WTC11 (cell line): ENCODE measurements at regions of chr4 and their contacts with region 1.

Region 1: DNA sequence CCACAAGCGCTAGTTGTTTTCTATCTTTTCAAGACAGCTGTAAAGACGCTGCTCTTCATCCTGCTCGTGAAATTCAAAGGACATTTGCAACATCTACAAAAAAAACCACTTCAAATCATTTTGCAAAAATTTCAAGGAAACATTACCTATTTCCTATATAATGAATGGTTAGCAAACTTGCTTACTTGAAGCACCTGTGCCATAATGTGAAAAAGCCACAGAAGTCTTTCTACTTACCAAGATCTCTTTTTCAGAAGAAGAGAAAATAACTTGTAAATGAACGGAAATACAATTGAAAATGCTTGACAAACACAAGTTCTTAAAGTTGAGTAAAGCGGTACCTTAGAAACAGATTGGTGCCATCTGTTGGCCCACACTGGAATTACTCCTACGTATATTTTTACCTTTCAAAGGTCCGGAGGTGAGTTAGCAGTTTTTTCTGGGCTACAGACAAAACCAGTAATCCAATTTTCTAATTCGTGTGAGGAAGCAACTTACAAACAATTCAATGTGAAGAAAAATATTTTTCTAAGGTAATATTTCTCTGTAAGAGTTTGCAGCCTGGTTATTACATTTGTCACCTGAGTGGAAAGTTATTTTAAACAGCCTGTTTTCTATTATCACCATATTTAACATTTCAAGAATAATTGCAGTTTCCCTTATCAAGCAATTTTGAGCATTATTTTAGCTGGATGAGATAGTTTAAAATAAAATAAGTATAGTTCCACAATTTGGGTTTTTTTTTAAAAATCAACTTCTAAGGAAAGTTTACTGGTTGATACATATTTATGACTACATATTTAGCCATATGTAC is at the start of gene TLR6:
- DNase-seq: peak; percentile 40
- ATAC-seq: peak; percentile 35; the same call in 1 of the 2 replicates
- H3K4me3 Mint-ChIP-seq: no peak within 1 kb of the TSS
- H3K27ac Mint-ChIP-seq: peak within 1 kb of the TSS; percentile 47
- H3K4me1 Mint-ChIP-seq: peaks cover 19% of the 10 kb centered on the region
- H3K27me3 Mint-ChIP-seq: no peaks in the 10 kb centered on the region
- CTCF ChIP-seq: peak; percentile 39; the same call in 1 of the 2 replicates
- total RNA-seq, gene TLR6: 0.11 to 0.25 TPM (median 0.11 TPM) in 3 replicates

Region 2: DNA sequence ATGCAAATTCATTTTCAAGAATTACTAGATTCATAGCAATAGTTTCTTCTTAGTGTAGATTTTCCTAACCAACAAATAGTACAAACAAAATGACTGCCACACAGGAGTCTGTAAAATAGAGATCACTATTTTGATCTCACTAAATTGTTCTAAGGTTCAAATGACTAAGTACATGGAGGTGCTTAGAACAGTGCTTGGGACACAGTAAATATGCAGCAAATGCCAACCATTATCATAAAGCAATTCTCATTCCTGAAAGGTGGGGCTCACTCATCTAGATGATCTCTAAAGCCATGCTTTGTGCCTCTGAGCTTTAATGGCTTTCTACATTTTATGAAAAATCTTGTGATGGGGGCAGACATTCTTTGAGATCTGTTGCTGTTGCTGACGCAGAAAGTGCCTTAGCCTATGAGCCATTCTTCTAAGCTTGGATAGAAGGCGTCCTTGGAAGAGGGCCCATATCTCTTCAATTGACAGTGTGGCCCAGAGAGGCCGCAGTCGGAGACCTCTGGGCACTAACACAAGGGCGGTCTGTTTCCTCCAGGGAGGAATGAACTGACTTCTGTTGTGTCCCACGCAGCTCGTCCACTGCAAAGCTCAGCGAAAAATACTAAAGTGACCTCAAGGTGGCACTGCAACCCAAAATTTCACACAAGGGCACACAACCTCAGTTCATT is 97.5 kb before region 1 on chr4:
- CTCF ChIA-PET with region 1: interaction called, 45 read pairs
- POLR2A ChIA-PET with region 1: no interaction called
- DNase-seq: peak; percentile 67
- ATAC-seq: peak; percentile 89
- H3K4me3 Mint-ChIP-seq: no peak overlapping the region
- H3K27ac Mint-ChIP-seq: no peak overlapping the region
- H3K4me1 Mint-ChIP-seq: peaks cover 9% of the 10 kb centered on the region; the same call in 1 of the 2 replicates
- H3K27me3 Mint-ChIP-seq: no peaks in the 10 kb centered on the region
- CTCF ChIP-seq: peak; percentile 52

Region 3: GRCh38 chr4:38837849-38838248 is 18.9 kb before region 1 on chr4:
- CTCF ChIA-PET with region 1: interaction called, 12 read pairs
- POLR2A ChIA-PET with region 1: no interaction called
- DNase-seq: no peak
- ATAC-seq: no peak
- H3K4me3 Mint-ChIP-seq: no peak overlapping the region
- H3K27ac Mint-ChIP-seq: no peak overlapping the region
- H3K4me1 Mint-ChIP-seq: peaks cover 10% of the 10 kb centered on the region
- H3K27me3 Mint-ChIP-seq: no peaks in the 10 kb centered on the region
- CTCF ChIP-seq: no peak

Region 4: GRCh38 chr4:38842994-38843393 is 13.7 kb before region 1 on chr4:
- CTCF ChIA-PET with region 1: interaction called, 12 read pairs
- POLR2A ChIA-PET with region 1: no interaction called
- DNase-seq: no peak
- ATAC-seq: no peak
- H3K4me3 Mint-ChIP-seq: no peak overlapping the region
- H3K27ac Mint-ChIP-seq: no peak overlapping the region
- H3K4me1 Mint-ChIP-seq: peaks cover 10% of the 10 kb centered on the region
- H3K27me3 Mint-ChIP-seq: no peaks in the 10 kb centered on the region
- CTCF ChIP-seq: no peak

Region 5: GRCh38 chr4:38872604-38873006 is 15.9 kb after region 1 on chr4:
- CTCF ChIA-PET with region 1: interaction called, 18 read pairs
- POLR2A ChIA-PET with region 1: interaction called, 3 read pairs
- DNase-seq: no peak
- ATAC-seq: no peak
- H3K4me3 Mint-ChIP-seq: no peak overlapping the region
- H3K27ac Mint-ChIP-seq: no peak overlapping the region
- H3K4me1 Mint-ChIP-seq: peaks cover 12% of the 10 kb centered on the region
- H3K27me3 Mint-ChIP-seq: no peaks in the 10 kb centered on the region
- CTCF ChIP-seq: no peak

Region 6: GRCh38 chr4:38889143-38889542 is 32.4 kb after region 1 on chr4:
- CTCF ChIA-PET with region 1: interaction called, 14 read pairs
- POLR2A ChIA-PET with region 1: no interaction called
- DNase-seq: no peak
- ATAC-seq: no peak
- H3K4me3 Mint-ChIP-seq: no peak overlapping the region
- H3K27ac Mint-ChIP-seq: no peak overlapping the region
- H3K4me1 Mint-ChIP-seq: peaks cover 45% of the 10 kb centered on the region
- H3K27me3 Mint-ChIP-seq: no peaks in the 10 kb centered on the region
- CTCF ChIP-seq: no peak

Region 7: GRCh38 chr4:38948551-38948950 is 91.8 kb after region 1 on chr4:
- CTCF ChIA-PET with region 1: no interaction called
- POLR2A ChIA-PET with region 1: no interaction called
- DNase-seq: no peak
- ATAC-seq: no peak
- H3K4me3 Mint-ChIP-seq: no peak overlapping the region
- H3K27ac Mint-ChIP-seq: no peak overlapping the region
- H3K4me1 Mint-ChIP-seq: no peaks in the 10 kb centered on the region
- H3K27me3 Mint-ChIP-seq: no peaks in the 10 kb centered on the region
- CTCF ChIP-seq: no peak

Region 8: DNA sequence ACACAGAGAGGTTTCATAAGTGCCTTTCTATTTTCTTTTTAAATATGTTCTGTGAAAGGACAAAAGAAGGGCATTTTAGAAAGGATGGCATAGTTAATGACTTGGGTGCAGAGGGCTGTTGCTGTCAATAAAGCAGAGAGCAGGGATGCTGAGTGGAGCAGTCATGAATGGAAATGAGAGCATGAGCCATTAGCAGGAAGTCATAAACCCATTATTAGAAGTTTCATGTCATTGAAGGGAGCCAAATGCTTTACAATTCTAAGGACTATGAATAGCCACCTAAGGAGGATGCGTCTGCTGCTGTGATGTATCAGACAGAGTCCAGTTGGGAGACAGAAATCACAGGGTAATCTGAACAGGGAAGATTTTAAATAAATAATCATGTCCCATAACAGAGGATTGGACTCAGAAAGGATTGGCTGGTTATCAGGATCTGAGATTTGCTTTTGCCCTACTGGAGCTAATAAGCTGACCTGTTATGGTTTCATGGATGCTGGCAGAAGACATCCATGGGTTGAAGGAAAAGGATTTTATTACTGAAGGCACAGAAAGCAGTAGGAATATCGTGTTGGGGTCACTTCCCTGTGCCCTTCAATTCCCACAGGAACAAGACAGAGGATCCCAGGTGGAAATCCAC is 278.1 kb after region 1 on chr4:
- CTCF ChIA-PET with region 1: interaction called, 14 read pairs
- POLR2A ChIA-PET with region 1: no interaction called
- DNase-seq: no peak
- ATAC-seq: no peak
- H3K4me3 Mint-ChIP-seq: no peak overlapping the region
- H3K27ac Mint-ChIP-seq: no peak overlapping the region
- H3K4me1 Mint-ChIP-seq: peaks cover 6% of the 10 kb centered on the region; the same call in 1 of the 2 replicates
- H3K27me3 Mint-ChIP-seq: no peaks in the 10 kb centered on the region
- CTCF ChIP-seq: no peak